ENCODE measurements at regions of chr2 and their contacts with region 1.

Region 1: GRCh38 chr2:86372641-86373503 is 35.4 kb upstream of the REEP1 start:
- DNase-seq: no peak
- H3K4me3 ChIP-seq: no peak overlapping the region
- H3K27ac ChIP-seq: no peak overlapping the region
- H3K4me1 ChIP-seq: peaks cover 10% of the 10 kb centered on the region
- H3K27me3 ChIP-seq: no peaks in the 10 kb centered on the region
- CTCF ChIP-seq: peak; percentile 70

Region 2: GRCh38 chr2:86221066-86221684 is 151.7 kb before region 1 on chr2:
- intact Hi-C with region 1: loop called (anchors 5 kb)
- DNase-seq: no peak
- H3K4me3 ChIP-seq: no peak overlapping the region
- H3K27ac ChIP-seq: peak overlapping the region; percentile 89
- H3K4me1 ChIP-seq: peaks cover 62% of the 10 kb centered on the region
- H3K27me3 ChIP-seq: no peaks in the 10 kb centered on the region
- CTCF ChIP-seq: peak; percentile 85